GM18951 (cell line): ENCODE measurements at regions of chr1 and their contacts with region 1.

Region 1: GRCh38 chr1:1730870-1731269 is 6.7 kb upstream of the CDK11A start:
- POLR2A ChIP-seq: no peak

Region 2: DNA sequence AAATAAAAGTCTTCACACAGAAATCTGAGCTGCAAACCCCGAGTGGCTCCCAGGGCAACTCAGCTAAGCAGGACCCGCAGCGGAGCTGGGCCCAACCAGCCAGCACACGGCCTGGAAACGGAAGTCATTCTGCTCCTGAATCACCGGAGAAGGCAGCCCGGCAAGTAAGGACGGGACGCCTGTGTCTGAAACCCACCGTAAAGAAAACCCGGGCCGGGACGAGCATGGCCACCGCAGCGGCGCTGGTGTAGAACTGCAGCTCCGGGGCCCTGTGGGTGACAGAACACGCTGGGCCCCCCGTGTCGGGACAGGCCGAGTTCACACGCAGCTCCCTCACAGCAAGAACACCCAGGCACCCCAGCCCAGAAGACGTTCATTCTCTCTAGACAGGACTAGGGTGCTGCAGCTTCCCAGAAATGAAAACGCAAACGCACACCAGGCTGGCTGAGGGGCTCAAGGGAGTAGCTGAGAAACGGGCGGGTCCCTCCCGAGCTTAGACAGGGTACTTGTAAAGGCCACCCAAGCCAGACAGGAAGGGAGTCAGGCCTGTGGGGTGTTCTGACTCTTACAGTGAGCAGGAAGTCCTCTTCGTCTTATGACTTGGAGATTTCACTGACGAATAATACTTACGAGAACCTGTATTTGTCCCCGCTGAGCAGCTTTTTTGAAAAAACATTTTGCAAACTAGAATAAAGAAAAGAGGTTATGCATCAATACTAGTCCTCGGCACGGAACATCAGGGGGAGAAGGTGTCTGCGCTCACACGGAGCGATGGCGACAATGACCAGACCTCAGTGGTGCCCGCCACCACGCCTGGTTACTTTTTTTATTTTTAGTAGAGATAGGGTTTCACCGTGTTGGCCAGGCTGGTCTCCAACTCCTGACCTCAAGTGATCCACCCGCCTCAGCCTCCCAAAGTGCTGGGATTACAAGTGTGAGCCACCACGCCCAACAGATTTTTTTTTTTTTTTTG is 61.1 kb before region 1 on chr1:
- in situ Hi-C with region 1: loop called (anchors 5 kb)
- POLR2A ChIP-seq: no peak

Region 3: DNA sequence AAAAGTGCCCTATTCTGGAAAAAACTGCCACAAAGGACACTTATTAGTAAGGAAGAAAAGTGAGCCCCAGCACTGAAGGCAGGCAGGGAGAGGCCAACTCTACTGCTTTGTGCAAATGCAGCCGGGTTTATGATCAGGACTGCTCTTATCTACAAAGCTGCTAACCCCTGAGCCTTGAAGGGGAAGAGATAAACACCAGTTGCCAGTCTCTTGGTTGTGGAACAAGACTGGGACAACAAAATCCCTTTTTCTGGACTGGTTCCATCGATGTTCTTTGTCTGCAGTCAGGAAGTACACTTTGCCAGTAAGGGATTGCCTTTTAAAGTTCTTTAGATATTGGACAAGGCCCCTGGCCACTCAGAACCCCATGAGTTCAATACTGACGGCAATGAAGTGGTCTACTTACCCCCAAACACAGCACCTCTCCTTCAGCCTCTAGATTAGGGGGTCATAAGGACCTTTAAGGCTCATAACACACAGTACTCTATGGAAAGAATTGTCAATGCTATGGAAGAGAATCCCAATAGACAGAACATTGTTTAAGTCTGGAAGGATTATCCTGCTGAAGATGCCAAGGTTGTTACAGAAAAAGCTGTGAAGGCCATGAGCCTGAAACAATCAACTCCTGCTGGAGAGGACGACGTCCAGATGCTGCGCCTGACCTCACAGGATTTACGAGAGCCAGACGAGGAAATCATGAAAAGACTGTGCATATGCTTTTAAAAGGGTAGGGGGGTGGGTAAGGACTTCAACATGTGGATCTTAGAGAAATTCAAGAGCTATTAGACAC is 116.4 kb after region 1 on chr1:
- in situ Hi-C with region 1: no loop called
- POLR2A ChIP-seq: no peak